ENCODE measurements at regions of chr15 and their contacts with region 1.

Region 1: DNA sequence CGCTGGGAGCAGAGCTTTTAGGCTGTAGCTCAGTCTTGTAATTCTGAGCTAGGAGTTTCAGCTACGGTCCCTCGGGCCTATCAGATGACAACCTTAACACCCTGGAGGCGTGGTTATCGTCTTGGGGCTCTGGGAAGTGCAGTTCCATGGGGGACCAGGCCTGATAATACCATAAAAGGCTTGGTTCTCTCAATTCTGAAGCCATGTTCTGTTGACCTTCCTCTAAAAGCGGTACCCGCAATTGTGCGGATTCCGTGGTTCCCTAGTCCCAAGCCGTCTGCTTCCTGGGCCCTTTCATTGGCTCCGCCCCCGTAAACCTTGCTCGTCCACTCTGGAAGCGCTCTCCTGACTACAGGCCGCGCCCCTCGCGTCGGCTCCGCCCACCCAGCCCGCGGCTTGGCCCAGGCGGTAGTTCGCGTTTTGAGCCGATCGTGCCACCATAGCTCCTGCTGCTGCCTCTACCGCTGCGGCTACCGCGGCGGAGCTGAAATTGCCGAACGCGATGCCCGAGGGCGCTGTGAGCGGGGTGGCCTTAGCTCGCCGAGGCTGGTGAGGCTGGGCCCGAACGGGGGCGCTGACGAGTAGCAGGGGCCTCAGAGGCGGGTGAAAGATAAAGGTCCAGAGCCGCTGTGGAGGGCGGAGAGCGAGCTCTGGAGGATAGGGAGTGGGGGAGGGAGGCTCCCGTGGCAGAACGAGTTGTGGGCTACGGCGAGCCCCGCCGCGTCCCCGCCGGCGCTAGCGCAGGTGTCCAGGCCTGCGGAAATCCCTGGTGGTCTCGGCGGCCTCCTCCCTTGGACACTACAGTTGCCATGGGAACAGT is at the start of gene MAPKBP1:
- DNase-seq: peak; percentile 92 to 99
- H3K4me3 ChIP-seq: peak within 1 kb of the TSS; percentile 73 to 82
- H3K27ac ChIP-seq: peak within 1 kb of the TSS; percentile 70 to 90
- H3K4me1 ChIP-seq: peaks cover 0 to 30% of the 10 kb centered on the region in 2 donors
- H3K27me3 ChIP-seq: no peaks in the 10 kb centered on the region
- CTCF ChIP-seq: peak; percentile 67 to 81 (median 74)
- total RNA-seq, gene MAPKBP1: 27.6 TPM

Region 2: GRCh38 chr15:41660235-41661077 is 113.8 kb before region 1 on chr15 and contains the start of gene MGA:
- intact Hi-C with region 1: loop called (anchors 2 kb)
- DNase-seq: peak; percentile 69 to 94
- H3K4me3 ChIP-seq: peak within 1 kb of the TSS; percentile 66 to 67
- H3K27ac ChIP-seq: peak within 1 kb of the TSS; percentile 82 to 85
- H3K4me1 ChIP-seq: peaks cover 0 to 14% of the 10 kb centered on the region in 2 donors
- H3K27me3 ChIP-seq: no peaks in the 10 kb centered on the region
- CTCF ChIP-seq: peak in 2 of 3 experiments; percentile 13 to 15
- total RNA-seq, gene MGA: 25.3 TPM

Region 3: GRCh38 chr15:41811432-41812195 is 37.3 kb after region 1 on chr15:
- intact Hi-C with region 1: loop called (anchors 1 kb)
- DNase-seq: peak in 1 of 2 donors; percentile 89
- H3K4me3 ChIP-seq: no peak overlapping the region
- H3K27ac ChIP-seq: no peak overlapping the region
- H3K4me1 ChIP-seq: no peaks in the 10 kb centered on the region
- H3K27me3 ChIP-seq: no peaks in the 10 kb centered on the region
- CTCF ChIP-seq: peak; percentile 85 to 88 (median 86)

Region 4: DNA sequence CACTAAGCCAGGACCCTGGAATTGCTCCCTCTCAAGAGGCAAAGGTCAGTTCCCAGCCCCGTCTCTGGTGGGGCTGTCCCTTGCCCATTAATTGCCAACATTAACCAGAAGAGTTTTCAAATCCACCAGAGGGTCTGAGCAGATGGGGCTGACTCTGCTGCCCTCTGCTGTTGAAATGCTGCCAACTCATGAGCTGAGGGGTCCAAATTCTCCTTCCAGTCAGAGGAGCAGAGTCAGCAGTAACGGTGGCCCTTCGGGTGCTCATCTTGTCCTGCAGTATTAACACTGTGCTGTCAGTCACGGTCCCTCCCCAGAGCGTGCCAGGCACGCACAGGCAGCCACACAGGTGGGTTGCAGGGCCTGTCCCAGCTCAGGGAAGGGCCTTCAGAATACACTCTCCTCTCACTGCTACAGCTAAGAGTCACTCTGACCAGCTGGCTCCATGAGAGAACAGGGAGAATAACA is 130.3 kb after region 1 on chr15:
- intact Hi-C with region 1: loop called (anchors 5 kb)
- DNase-seq: no peak
- H3K4me3 ChIP-seq: no peak overlapping the region
- H3K27ac ChIP-seq: peak overlapping the region in 1 of 2 donors; percentile 38
- H3K4me1 ChIP-seq: peaks cover 0 to 3% of the 10 kb centered on the region in 2 donors
- H3K27me3 ChIP-seq: no peaks in the 10 kb centered on the region
- CTCF ChIP-seq: peak; percentile 58 to 76 (median 73)

Region 5: GRCh38 chr15:42056934-42057779 is 282.9 kb after region 1 on chr15:
- intact Hi-C with region 1: loop called (anchors 5 kb)
- DNase-seq: peak; percentile 25 to 75
- H3K4me3 ChIP-seq: peak overlapping the region in 1 of 2 donors; percentile 51
- H3K27ac ChIP-seq: no peak overlapping the region
- H3K4me1 ChIP-seq: no peaks in the 10 kb centered on the region
- H3K27me3 ChIP-seq: no peaks in the 10 kb centered on the region
- CTCF ChIP-seq: peak; percentile 57 to 69 (median 57)

Measured in ascending aorta (tissue), 2 donors.